ENCODE measurements at regions of chr11 and their contacts with region 1.

Region 1: GRCh38 chr11:64846998-64847666 is 2.7 kb upstream of the CDC42BPG start:
- DNase-seq: peak; percentile 99
- ATAC-seq: peak; percentile 70
- H3K4me3 Mint-ChIP-seq: peak overlapping the region; percentile 42; the same call in 1 of the 2 replicates
- H3K27ac Mint-ChIP-seq: peak overlapping the region; percentile 87
- H3K4me1 Mint-ChIP-seq: peaks cover 45% of the 10 kb centered on the region
- H3K27me3 Mint-ChIP-seq: no peaks in the 10 kb centered on the region
- CTCF ChIP-seq: peak; percentile 96

Region 2: DNA sequence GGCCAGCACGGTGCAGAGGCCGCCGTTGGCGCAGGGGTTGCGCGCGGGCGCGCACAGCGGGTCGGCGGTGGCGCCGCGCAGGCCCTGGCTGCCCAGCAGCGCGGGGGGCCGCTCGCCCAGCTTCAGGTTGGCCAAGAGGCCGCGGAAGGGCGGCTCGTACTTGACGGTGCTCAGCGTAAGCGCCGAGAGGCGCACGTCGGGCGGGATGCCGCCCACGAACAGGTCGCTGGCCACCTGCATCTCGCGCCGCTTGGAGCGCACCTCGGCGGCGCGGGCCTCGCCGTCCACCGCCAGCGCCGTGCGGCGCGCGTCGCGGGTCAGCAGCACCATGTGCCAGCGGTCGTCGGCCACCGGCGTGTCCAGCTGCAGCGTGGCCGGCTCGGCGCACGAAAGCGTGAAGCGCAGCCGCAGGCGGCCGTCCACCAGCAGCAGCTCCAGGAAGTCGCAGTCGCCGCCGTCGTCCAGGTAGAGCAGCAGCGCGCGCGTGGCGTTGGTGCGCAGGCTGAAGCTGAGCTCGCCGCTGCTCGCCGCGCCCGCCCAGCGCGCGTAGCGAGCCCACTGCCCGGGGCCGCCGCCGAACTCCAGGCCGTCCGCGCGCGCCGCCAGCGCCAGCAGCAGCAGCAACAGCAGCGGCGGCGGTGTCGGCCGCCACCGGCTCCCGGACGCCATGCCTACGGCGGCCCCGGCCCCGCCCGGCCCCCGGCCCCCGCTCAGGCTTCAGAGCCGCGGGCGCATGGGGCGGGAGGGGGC is 133.9 kb before region 1 on chr11:
- CTCF ChIA-PET with region 1: no interaction called
- POLR2A ChIA-PET with region 1: no interaction called
- DNase-seq: peak; percentile 39
- ATAC-seq: 0 out of 2 replicates have a peak, but pooled peaks have one; percentile 1
- H3K4me3 Mint-ChIP-seq: no peak overlapping the region
- H3K27ac Mint-ChIP-seq: no peak overlapping the region
- H3K4me1 Mint-ChIP-seq: peaks cover 57% of the 10 kb centered on the region
- H3K27me3 Mint-ChIP-seq: peaks cover 73% of the 10 kb centered on the region
- CTCF ChIP-seq: no peak

Region 3: DNA sequence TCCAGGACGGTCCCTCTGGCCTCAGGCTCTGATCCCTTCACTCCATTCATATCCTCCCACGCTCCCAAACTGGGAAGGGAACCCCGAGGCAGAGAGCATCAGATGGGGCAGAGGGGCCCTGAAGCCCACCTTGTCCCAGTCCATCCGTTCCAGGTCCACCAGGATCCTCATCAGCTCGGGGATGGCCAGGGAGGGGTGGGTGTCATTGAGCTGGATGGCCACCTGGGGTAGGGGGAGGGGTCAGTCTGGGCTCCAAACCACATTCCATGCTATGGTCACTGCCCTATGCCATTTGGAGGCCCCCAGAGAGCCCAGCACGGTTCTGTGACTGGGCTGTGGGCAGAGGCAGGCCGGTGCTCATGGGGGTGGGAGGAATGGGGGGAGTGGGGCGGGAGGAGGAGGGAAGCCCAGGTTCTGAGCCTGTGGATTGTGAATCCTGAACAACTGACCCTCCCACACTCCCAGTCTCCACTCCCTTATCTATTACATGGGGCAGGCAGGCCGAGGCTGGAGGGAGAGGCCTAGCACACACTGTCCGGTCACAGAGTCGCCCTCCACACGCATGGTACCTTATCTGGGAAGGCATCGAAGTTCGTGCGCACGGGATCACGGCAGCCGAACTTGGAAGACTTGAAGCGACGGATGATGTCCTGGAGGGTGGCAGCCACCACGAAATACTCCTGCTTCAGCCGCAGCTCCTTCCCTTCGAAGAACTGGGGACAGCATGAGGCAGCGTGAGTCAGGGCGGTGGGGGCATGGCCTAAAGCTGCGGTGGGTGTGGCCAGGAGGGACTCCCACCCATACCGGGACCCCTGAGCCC is 92.8 kb before region 1 on chr11:
- CTCF ChIA-PET with region 1: no interaction called
- POLR2A ChIA-PET with region 1: no interaction called
- DNase-seq: no peak
- ATAC-seq: no peak
- H3K4me3 Mint-ChIP-seq: no peak overlapping the region
- H3K27ac Mint-ChIP-seq: peak overlapping the region; percentile 72; the same call in 1 of the 2 replicates
- H3K4me1 Mint-ChIP-seq: peaks cover 27% of the 10 kb centered on the region
- H3K27me3 Mint-ChIP-seq: no peaks in the 10 kb centered on the region; the same call in 1 of the 2 replicates
- CTCF ChIP-seq: no peak

Region 4: GRCh38 chr11:64767344-64768299 is 79.5 kb before region 1 on chr11:
- CTCF ChIA-PET with region 1: no interaction called
- POLR2A ChIA-PET with region 1: no interaction called
- DNase-seq: peak; percentile 88
- ATAC-seq: peak; percentile 38
- H3K4me3 Mint-ChIP-seq: no peak overlapping the region
- H3K27ac Mint-ChIP-seq: peak overlapping the region; percentile 86
- H3K4me1 Mint-ChIP-seq: peaks cover 50% of the 10 kb centered on the region
- H3K27me3 Mint-ChIP-seq: no peaks in the 10 kb centered on the region
- CTCF ChIP-seq: peak; percentile 89

Region 5: DNA sequence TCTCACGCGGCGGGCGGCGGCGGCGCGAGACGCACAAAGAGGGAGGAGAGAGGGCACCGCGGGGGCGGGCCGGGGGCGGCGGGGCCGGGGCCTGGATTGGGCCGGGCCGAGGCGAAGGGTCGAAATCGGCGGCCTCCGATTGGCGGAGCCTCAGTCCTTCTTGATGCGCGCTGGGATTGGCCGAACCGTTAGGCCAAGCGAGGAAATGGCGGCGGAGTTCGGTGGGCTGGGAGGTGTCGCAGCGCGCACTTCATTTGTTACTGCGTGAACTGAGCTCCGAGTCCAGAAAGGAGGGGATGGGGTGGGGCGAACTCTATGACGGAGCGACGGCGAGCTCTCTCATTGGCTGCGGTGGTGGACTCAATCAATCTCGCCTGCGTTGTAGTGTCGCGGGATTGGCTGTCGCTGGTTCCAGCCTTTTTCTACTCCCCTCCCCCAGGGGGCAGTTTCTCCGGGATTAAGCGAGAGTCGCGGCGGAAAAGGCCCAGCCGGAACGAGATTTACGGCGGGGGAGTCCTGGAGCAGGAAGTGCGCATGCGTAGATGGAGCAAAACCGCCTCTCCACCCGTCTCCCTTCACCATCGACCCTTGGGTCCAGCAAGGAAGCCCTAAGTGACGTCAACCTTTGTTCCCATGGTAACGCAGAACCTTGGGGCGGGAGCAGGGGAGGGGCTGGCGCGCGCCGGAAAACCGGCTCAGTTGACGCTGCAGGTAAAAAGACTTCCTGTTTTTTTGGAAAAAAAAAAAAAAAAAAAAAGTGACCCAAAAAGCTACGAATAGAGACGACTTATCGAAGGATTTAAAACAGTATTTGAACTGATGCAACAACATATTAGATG is 68.4 kb before region 1 on chr11 and contains the start of gene SF1:
- CTCF ChIA-PET with region 1: interaction called, 17 read pairs
- POLR2A ChIA-PET with region 1: interaction called, 3 read pairs
- DNase-seq: peak; percentile 98
- ATAC-seq: peak; percentile 95
- H3K4me3 Mint-ChIP-seq: peak within 1 kb of the TSS; percentile 79
- H3K27ac Mint-ChIP-seq: peak within 1 kb of the TSS; percentile 98
- H3K4me1 Mint-ChIP-seq: peaks cover 32% of the 10 kb centered on the region
- H3K27me3 Mint-ChIP-seq: no peaks in the 10 kb centered on the region
- CTCF ChIP-seq: no peak
- total RNA-seq, gene SF1: 285 to 314 TPM (median 300 TPM) in 3 replicates

Region 6: GRCh38 chr11:64803163-64803845 is 43.8 kb before region 1 on chr11 and contains the start of gene MAP4K2:
- CTCF ChIA-PET with region 1: interaction called, 33 read pairs
- POLR2A ChIA-PET with region 1: no interaction called
- DNase-seq: peak; percentile 90
- ATAC-seq: peak; percentile 86
- H3K4me3 Mint-ChIP-seq: peak within 1 kb of the TSS; percentile 92
- H3K27ac Mint-ChIP-seq: peak within 1 kb of the TSS; percentile 99
- H3K4me1 Mint-ChIP-seq: peaks cover 11% of the 10 kb centered on the region
- H3K27me3 Mint-ChIP-seq: no peaks in the 10 kb centered on the region
- CTCF ChIP-seq: no peak
- total RNA-seq, gene MAP4K2: 24.5 to 31.6 TPM (median 28.3 TPM) in 3 replicates

Region 7: DNA sequence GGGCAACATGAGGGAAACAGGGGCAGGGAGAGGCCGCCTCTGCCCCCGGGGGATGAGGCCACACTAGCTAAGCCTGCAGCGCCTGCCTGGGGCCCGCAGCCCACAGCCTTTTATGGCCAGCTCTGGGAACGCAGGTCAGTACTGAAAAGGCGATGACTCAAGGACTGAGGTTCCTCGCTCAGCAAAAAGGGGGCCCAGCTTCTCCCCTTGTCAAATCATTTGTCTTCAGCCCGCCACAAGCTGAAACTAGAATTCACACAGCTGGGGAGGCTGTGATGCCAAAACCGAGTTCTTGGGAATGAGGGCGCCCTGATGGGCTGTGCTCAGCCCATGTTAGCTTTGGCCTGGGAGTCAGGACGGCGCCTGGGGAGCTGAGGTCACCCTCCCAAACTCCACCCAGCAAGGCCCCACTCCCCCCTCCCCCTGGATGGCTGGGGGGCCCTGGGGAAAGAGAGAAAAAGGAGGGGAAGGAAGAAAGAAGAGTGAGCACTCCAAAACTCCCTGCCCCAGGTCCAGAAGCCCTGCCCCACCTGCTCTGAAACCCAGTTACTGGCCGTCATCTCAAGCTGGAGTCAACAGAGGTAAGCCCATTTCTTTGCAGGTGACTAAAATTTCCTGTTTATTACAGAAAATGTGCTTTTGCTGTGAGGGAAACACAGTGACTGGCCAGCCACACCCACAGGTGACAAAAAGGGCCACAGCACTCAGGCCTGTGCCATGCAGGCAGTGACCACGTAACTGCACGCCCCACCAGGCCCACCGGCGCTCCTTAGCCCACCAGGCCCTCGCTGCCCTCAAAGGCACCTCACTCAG is 17.5 kb after region 1 on chr11:
- CTCF ChIA-PET with region 1: interaction called, 97 read pairs
- POLR2A ChIA-PET with region 1: interaction called, 3 read pairs
- DNase-seq: no peak
- ATAC-seq: peak; percentile 18; the same call in 1 of the 2 replicates
- H3K4me3 Mint-ChIP-seq: no peak overlapping the region
- H3K27ac Mint-ChIP-seq: no peak overlapping the region
- H3K4me1 Mint-ChIP-seq: peaks cover 17% of the 10 kb centered on the region
- H3K27me3 Mint-ChIP-seq: no peaks in the 10 kb centered on the region
- CTCF ChIP-seq: no peak

Region 8: GRCh38 chr11:64935359-64936081 is 88.4 kb after region 1 on chr11 and contains the start of gene GPHA2:
- CTCF ChIA-PET with region 1: interaction called, 21 read pairs
- POLR2A ChIA-PET with region 1: no interaction called
- DNase-seq: peak; percentile 80
- ATAC-seq: peak; percentile 88
- H3K4me3 Mint-ChIP-seq: peak within 1 kb of the TSS; percentile 50
- H3K27ac Mint-ChIP-seq: peak within 1 kb of the TSS; percentile 90
- H3K4me1 Mint-ChIP-seq: peaks cover 24% of the 10 kb centered on the region
- H3K27me3 Mint-ChIP-seq: no peaks in the 10 kb centered on the region
- CTCF ChIP-seq: no peak
- total RNA-seq, gene GPHA2: 1.0 to 1.6 TPM (median 1.6 TPM) in 3 replicates

Region 9: GRCh38 chr11:65013692-65014145 is 166.6 kb after region 1 on chr11:
- CTCF ChIA-PET with region 1: interaction called, 37 read pairs
- POLR2A ChIA-PET with region 1: interaction called, 3 read pairs
- DNase-seq: peak; percentile 95
- ATAC-seq: peak; percentile 82
- H3K4me3 Mint-ChIP-seq: peak overlapping the region; percentile 78
- H3K27ac Mint-ChIP-seq: peak overlapping the region; percentile 92
- H3K4me1 Mint-ChIP-seq: peaks cover 18% of the 10 kb centered on the region
- H3K27me3 Mint-ChIP-seq: no peaks in the 10 kb centered on the region
- CTCF ChIP-seq: 0 out of 2 replicates have a peak, but pooled peaks have one; percentile 47

Region 10: GRCh38 chr11:65117216-65118096 is 270.3 kb after region 1 on chr11 and contains the start of gene ZNHIT2:
- CTCF ChIA-PET with region 1: interaction called, 37 read pairs
- POLR2A ChIA-PET with region 1: no interaction called
- DNase-seq: peak; percentile 100
- ATAC-seq: peak; percentile 69
- H3K4me3 Mint-ChIP-seq: peak within 1 kb of the TSS; percentile 86
- H3K27ac Mint-ChIP-seq: peak within 1 kb of the TSS; percentile 100
- H3K4me1 Mint-ChIP-seq: peaks cover 22% of the 10 kb centered on the region
- H3K27me3 Mint-ChIP-seq: no peaks in the 10 kb centered on the region
- CTCF ChIP-seq: peak; percentile 91
- total RNA-seq, gene ZNHIT2: 15.9 to 18.3 TPM (median 16.7 TPM) in 3 replicates